ENCODE measurements at regions of chr2 and their contacts with region 1.

Region 1: GRCh38 chr2:134668821-134669220 is 50.0 kb downstream of the TMEM163 start:
- DNase-seq: peak; percentile 82 to 96 (median 87)
- H3K4me3 ChIP-seq: peak overlapping the region in 1 of 2 donors; percentile 11
- H3K4me3 Mint-ChIP-seq: peak overlapping the region; percentile 45 to 77 (median 60)
- H3K27ac ChIP-seq: peak overlapping the region; percentile 59
- H3K27ac Mint-ChIP-seq: peak overlapping the region; percentile 84 to 99 (median 93)
- H3K4me1 ChIP-seq: peaks cover 77% of the 10 kb centered on the region
- H3K4me1 Mint-ChIP-seq: peaks cover 65 to 97% (median 86%) of the 10 kb centered on the region in 4 donors
- H3K27me3 ChIP-seq: no peaks in the 10 kb centered on the region
- H3K27me3 Mint-ChIP-seq: peaks cover 0 to 1% of the 10 kb centered on the region in 2 donors

Region 2: GRCh38 chr2:134218930-134219658 is 449.7 kb before region 1 on chr2:
- CTCF ChIA-PET with region 1: no interaction called
- POLR2A ChIA-PET with region 1: no interaction called
- intact Hi-C with region 1: loop called (anchors 10 kb)
- DNase-seq: peak in 4 of 5 donors; percentile 40 to 56 (median 48)
- H3K4me3 ChIP-seq: peak overlapping the region; percentile 12 to 13
- H3K4me3 Mint-ChIP-seq: peak overlapping the region; percentile 80 to 90 (median 84)
- H3K27ac ChIP-seq: peak overlapping the region; percentile 41
- H3K27ac Mint-ChIP-seq: peak overlapping the region; percentile 85 to 97 (median 90)
- H3K4me1 ChIP-seq: peaks cover 60% of the 10 kb centered on the region
- H3K4me1 Mint-ChIP-seq: peaks cover 65 to 78% (median 71%) of the 10 kb centered on the region in 4 donors
- H3K27me3 ChIP-seq: no peaks in the 10 kb centered on the region
- H3K27me3 Mint-ChIP-seq: no peaks in the 10 kb centered on the region

Region 3: DNA sequence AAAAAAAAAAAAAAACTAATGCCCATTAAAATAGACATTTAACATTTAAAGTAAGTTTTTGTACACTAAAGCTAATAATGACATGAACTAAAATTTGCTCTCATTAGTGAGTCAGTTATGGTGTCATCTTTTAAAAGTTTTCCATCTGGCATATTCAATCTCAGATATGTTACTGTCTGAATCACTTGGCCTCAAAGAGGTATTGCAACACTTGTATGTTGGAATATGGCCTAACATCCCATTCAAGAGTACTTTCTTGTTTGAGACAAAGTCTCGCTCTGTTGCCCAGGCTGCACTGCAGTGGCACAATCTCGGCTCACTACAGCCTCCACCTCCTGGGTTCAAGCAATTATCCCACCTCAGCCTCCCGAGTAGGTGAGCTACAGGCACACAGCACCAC is 119.7 kb before region 1 on chr2:
- CTCF ChIA-PET with region 1: no interaction called
- POLR2A ChIA-PET with region 1: no interaction called
- intact Hi-C with region 1: no loop called
- DNase-seq: no peak
- H3K4me3 ChIP-seq: no peak overlapping the region
- H3K4me3 Mint-ChIP-seq: no peak overlapping the region
- H3K27ac ChIP-seq: no peak overlapping the region
- H3K27ac Mint-ChIP-seq: no peak overlapping the region
- H3K4me1 ChIP-seq: no peaks in the 10 kb centered on the region
- H3K4me1 Mint-ChIP-seq: no peaks in the 10 kb centered on the region
- H3K27me3 ChIP-seq: no peaks in the 10 kb centered on the region
- H3K27me3 Mint-ChIP-seq: peaks cover 3 to 8% of the 10 kb centered on the region in 2 donors

Region 4: GRCh38 chr2:134570676-134571075 is 98.1 kb before region 1 on chr2:
- CTCF ChIA-PET with region 1: no interaction called
- POLR2A ChIA-PET with region 1: no interaction called
- intact Hi-C with region 1: no loop called
- DNase-seq: no peak
- H3K4me3 ChIP-seq: no peak overlapping the region
- H3K4me3 Mint-ChIP-seq: no peak overlapping the region
- H3K27ac ChIP-seq: no peak overlapping the region
- H3K27ac Mint-ChIP-seq: peak overlapping the region in 1 of 7 donors; percentile 20
- H3K4me1 ChIP-seq: no peaks in the 10 kb centered on the region
- H3K4me1 Mint-ChIP-seq: no peaks in the 10 kb centered on the region
- H3K27me3 ChIP-seq: no peaks in the 10 kb centered on the region
- H3K27me3 Mint-ChIP-seq: peaks cover under 1 to 2% of the 10 kb centered on the region in 2 donors

Region 5: DNA sequence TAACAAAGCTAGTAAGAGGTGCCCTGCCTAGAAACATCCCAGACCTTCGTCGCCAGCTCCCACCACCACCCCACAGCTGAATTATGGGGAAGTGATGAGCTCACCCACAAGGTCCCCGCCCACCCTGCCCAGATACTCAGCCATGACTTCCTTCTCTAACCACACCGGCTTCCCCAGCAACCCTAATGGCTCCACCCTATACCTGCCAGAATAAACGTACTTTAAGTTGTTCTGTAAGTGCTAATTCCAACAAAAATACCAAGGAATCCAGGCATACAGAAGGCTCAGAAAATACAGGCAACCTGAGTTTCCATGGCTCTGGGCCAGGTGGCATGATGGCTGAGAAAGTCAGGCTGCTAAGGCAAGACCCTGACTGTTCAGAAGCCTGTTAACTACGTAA is 10.9 kb after region 1 on chr2:
- CTCF ChIA-PET with region 1: interaction called, 14 read pairs
- POLR2A ChIA-PET with region 1: interaction called, 29 read pairs
- intact Hi-C with region 1: loop called (anchors 1 kb)
- DNase-seq: peak; percentile 58 to 75 (median 60)
- H3K4me3 ChIP-seq: no peak overlapping the region
- H3K4me3 Mint-ChIP-seq: peak overlapping the region; percentile 5 to 83 (median 68)
- H3K27ac ChIP-seq: no peak overlapping the region
- H3K27ac Mint-ChIP-seq: peak overlapping the region; percentile 10 to 71 (median 63)
- H3K4me1 ChIP-seq: peaks cover 52% of the 10 kb centered on the region
- H3K4me1 Mint-ChIP-seq: peaks cover 39 to 69% (median 52%) of the 10 kb centered on the region in 4 donors
- H3K27me3 ChIP-seq: no peaks in the 10 kb centered on the region
- H3K27me3 Mint-ChIP-seq: no peaks in the 10 kb centered on the region

Region 6: DNA sequence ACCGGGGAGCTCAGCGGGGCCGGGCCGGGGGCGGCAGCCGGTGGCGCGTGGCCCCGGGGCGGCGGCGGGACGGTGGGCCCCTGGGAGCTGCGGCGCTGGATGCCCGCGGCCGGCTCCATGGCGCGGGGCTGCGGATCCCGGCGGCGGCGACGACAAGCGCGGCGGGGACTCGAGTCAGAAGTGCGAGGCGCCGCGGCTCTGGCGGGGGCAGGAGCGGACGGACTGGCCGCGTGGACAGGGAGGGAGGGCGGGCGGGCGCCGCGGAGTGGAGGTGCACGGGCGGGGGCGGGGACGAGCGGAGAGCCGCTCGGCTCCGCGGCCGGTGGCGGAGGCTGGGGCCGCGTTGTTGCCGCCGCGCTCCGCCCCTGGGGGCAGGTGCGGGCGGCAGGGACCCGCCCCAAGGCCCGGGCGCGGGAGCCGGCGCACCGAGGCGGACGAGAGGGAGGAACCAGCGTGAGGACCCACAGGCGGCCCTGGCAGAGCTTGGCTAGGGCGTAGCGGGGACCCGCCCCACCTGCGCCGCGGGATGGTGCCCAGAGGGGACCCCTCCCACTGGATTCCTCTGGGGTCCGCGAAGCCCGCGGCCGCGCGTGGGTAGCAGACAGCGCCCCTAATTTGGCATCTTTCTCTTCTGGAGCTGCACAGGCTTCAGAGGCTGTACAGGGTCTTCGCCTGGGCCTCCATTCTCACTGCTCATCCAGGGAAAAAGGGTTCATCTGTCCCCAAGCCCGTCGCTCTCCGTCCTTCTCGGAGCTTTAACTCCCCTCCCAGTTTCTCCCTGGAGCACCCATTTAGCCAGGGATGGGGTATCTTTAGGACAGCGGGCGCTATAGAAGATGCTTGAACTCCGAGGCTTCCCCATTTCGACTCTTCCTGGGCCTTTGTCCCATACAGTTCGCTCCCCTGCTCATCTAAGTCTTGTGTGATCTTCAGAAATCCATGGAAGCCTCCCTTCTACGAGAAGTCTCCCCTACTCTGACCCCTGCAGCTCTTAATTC is 50.3 kb after region 1 on chr2 and contains the start of gene TMEM163:
- CTCF ChIA-PET with region 1: no interaction called
- POLR2A ChIA-PET with region 1: interaction called, 9 read pairs
- intact Hi-C with region 1: loop called (anchors 5 kb)
- DNase-seq: peak in 4 of 5 donors; percentile 15 to 36 (median 18)
- H3K4me3 ChIP-seq: peak within 1 kb of the TSS in 1 of 2 donors; percentile 19
- H3K4me3 Mint-ChIP-seq: peak within 1 kb of the TSS; percentile 71 to 85 (median 79)
- H3K27ac ChIP-seq: no peak within 1 kb of the TSS
- H3K27ac Mint-ChIP-seq: no peak within 1 kb of the TSS
- H3K4me1 ChIP-seq: peaks cover 18% of the 10 kb centered on the region
- H3K4me1 Mint-ChIP-seq: peaks cover 8 to 31% (median 16%) of the 10 kb centered on the region in 4 donors
- H3K27me3 ChIP-seq: peaks cover 30% of the 10 kb centered on the region
- H3K27me3 Mint-ChIP-seq: peaks cover 48 to 50% of the 10 kb centered on the region in 2 donors
- total RNA-seq, gene TMEM163: not detected

Region 7: DNA sequence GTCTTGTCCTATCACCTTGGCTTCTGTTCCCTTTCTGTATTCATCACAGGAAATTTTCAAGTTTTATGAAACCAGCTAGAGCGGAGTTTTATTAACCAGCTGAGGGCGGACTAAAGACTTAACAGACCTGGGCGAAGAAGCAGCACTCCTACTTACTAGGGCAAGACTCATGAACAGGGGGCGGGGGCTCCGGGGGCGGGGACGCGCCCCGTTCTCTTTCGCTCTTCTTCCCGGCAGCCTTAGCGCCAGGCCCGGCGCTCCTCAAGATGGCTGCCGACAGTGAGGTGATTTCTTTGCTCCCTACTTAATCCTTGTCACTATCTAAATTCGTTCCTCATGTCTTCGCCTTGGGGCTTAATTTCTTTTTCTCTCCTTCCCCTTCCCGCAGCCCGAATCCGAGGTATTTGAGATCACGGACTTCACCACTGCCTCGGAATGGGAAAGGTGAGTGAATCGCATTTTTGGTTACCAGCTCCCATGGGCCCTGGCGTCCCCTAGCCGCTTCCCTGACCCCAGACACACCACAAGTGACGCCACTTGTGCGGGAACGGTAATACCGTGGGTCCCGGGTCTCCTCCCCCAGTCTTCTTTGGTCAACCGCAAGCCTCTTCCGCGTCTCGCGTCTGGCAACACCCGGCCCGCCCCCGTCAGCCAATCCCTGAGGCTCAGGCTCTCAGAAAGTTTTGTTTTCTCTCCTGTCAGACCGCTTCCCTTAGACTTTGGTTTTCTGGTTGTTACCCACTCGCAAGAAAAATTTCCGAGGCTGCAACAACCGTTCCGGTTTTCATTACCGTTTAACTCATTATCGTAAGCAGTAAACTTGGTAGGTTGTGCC is 383.4 kb after region 1 on chr2 and contains the start of gene RAB3GAP1:
- CTCF ChIA-PET with region 1: no interaction called
- POLR2A ChIA-PET with region 1: no interaction called
- intact Hi-C with region 1: loop called (anchors 5 kb)
- DNase-seq: peak; percentile 92 to 97 (median 94)
- H3K4me3 ChIP-seq: peak within 1 kb of the TSS; percentile 98 to 99
- H3K4me3 Mint-ChIP-seq: peak within 1 kb of the TSS; percentile 92 to 99 (median 98)
- H3K27ac ChIP-seq: peak within 1 kb of the TSS; percentile 97
- H3K27ac Mint-ChIP-seq: peak within 1 kb of the TSS; percentile 97 to 100 (median 100)
- H3K4me1 ChIP-seq: peaks cover 38% of the 10 kb centered on the region
- H3K4me1 Mint-ChIP-seq: peaks cover 23 to 48% (median 35%) of the 10 kb centered on the region in 4 donors
- H3K27me3 ChIP-seq: no peaks in the 10 kb centered on the region
- H3K27me3 Mint-ChIP-seq: no peaks in the 10 kb centered on the region
- total RNA-seq, gene RAB3GAP1: 45.1 to 46.7 TPM